Activated B cell treated with CpG ODN at 0.5 μM for 24 hours (primary cell): ENCODE measurements at regions of chr5 and their contacts with region 1.

Region 1: DNA sequence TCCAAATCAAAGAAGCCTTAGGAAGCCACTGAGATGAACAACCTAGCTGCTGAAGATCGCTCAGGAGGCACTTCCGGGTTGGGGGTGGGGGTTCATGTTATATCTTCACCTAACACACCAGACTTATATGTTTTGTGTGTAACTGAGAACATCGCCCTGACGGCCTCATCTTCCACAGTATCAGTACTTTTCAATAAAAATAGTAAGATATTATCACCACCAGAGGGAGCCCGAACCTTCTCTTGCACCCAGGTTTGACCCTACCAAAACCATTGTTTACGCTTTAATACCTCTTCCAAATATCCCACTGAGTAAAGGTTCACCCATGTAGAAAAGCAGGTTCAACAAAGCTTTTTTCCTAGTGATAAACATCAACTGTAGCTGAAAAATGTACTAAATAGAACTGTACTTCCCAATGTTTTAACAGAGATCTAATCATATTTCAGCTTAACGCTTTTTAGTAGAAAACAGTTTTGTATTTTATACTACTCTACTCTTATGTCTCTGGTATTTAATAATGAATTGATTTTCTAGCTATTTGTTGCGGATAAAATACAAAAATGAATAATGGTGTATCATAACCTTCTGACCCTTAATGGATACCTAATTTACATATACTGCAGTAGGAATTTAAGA is 244.0 kb downstream of the EPB41L4A start:
- DNase-seq: no peak
- ATAC-seq: peak; percentile 73
- H3K4me3 Mint-ChIP-seq: no peak overlapping the region
- H3K27ac Mint-ChIP-seq: no peak overlapping the region
- H3K4me1 Mint-ChIP-seq: peaks cover 4% of the 10 kb centered on the region
- H3K27me3 Mint-ChIP-seq: no peaks in the 10 kb centered on the region
- CTCF ChIP-seq: no peak

Region 2: DNA sequence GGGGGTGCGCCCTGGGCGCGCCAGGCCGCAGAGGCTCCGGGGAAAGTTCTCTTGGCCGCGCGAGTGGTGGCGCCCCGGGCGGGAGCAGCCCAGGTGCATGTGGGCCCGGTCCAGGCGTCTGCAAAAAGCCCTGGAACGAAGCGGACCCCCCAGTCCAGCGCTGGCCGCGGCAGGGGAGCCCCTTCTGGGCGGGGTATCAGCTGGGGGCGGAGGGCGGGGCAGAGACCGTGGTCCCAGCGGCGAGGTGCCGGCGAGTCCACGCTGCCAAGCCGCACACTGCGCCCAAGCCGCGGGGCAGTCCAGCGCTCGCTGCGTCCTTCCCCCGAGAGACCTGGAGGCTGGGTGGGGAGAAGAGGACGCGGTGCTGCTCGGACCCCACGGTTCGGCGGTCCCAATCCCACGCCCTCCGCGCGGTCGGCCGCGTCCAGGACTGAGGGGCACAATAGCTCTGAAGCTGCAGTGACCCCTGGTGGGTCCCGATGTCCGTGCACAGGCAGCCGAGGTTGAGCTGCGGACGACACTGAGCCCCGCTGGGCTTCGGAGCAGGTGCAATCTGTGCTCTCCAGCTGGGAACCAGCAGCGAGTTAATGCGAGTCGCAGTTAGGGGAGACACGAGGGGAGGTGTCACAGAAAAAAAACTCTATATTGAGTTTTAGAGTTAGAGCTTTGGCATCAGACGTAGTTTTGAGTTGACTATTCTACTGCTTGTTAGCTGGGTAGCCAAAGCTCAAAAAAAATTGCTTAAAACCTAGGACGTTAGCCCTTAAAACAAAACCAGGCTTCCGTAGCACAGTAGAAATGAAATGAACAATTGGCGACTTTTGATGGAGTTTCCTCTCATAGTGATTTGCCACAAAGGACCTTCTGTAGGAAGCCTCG is 245.1 kb after region 1 on chr5:
- CTCF ChIA-PET with region 1: interaction called, 94 read pairs
- POLR2A ChIA-PET with region 1: interaction called, 5 read pairs
- intact Hi-C with region 1: loop called (anchors 1 kb)
- DNase-seq: peak; percentile 68
- ATAC-seq: peak; percentile 84
- H3K4me3 Mint-ChIP-seq: peak overlapping the region; percentile 86
- H3K27ac Mint-ChIP-seq: no peak overlapping the region
- H3K4me1 Mint-ChIP-seq: peaks cover 11% of the 10 kb centered on the region
- H3K27me3 Mint-ChIP-seq: peaks cover 14% of the 10 kb centered on the region
- CTCF ChIP-seq: no peak

Region 3: DNA sequence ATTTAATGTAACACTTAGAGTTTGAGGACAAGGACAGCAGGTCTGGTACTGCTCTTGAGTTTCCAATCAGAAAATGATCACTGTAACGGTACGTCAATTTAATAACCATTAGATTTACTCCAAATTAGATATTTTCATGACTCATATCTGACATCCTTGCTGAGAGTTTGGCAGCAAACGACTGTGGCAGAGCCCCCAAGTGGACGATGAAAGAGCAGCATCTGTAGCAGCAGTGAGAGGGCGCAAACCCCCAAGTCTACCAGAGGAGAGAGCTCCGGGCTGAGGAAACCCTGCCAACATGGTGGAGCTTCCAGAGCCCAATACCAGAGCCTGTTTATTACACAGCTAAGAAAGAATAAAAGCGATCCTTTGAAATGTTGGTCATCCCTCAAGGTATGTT is 317.2 kb after region 1 on chr5:
- CTCF ChIA-PET with region 1: interaction called, 10 read pairs
- POLR2A ChIA-PET with region 1: no interaction called
- intact Hi-C with region 1: no loop called
- DNase-seq: no peak
- ATAC-seq: peak; percentile 98
- H3K4me3 Mint-ChIP-seq: no peak overlapping the region
- H3K27ac Mint-ChIP-seq: no peak overlapping the region
- H3K4me1 Mint-ChIP-seq: peaks cover 7% of the 10 kb centered on the region
- H3K27me3 Mint-ChIP-seq: no peaks in the 10 kb centered on the region
- CTCF ChIP-seq: no peak

Region 4: GRCh38 chr5:112551419-112552032 is 376.4 kb after region 1 on chr5:
- CTCF ChIA-PET with region 1: interaction called, 12 read pairs
- POLR2A ChIA-PET with region 1: no interaction called
- intact Hi-C with region 1: loop called (anchors 1 kb)
- DNase-seq: no peak
- ATAC-seq: peak; percentile 77
- H3K4me3 Mint-ChIP-seq: no peak overlapping the region
- H3K27ac Mint-ChIP-seq: no peak overlapping the region
- H3K4me1 Mint-ChIP-seq: peaks cover 33% of the 10 kb centered on the region
- H3K27me3 Mint-ChIP-seq: no peaks in the 10 kb centered on the region
- CTCF ChIP-seq: peak; percentile 16

Region 5: DNA sequence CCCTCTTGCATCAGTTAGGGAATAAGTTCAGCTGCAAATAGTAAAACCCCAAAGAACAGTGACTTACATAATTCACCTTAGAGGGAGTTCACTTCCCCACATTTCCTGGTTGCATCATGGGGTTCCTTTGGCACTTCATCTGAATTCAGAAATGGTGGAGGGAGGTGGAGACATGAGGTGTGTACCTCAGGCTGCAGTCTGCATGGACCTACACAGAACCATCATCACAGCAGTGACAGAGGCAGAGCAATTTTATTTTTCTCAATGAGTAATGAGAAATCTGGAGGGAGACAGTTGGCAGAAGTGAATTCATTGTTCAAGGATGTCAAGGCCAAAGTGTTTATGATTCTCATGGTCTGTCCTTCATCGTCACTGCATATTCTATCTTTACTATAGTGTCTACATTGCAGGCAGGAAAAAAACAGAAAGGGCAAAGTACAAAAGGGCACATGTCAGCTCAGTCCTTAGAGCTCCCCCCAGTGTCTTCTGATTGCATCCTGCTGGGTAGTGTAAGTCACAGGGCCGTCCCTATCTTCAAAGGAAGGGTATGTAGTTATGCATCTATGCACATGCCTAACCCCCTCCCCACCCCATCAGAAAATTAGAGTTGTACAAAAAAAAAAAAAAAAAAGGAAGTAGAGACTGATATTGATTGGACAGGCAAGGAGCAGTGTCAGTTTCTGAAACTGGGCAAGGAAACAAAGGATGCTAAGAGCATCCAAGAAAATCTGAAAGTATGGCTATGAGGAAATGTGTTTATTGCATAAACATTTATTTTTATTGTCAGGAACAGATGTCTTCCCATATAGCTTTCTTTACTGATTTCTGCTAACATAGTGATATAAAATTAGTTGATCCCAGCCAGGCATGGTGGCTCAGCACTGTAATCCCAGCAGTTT is 429.9 kb after region 1 on chr5:
- CTCF ChIA-PET with region 1: interaction called, 7 read pairs
- POLR2A ChIA-PET with region 1: no interaction called
- intact Hi-C with region 1: loop called (anchors 2 kb)
- DNase-seq: no peak
- ATAC-seq: peak; percentile 98
- H3K4me3 Mint-ChIP-seq: no peak overlapping the region
- H3K27ac Mint-ChIP-seq: no peak overlapping the region
- H3K4me1 Mint-ChIP-seq: peaks cover 11% of the 10 kb centered on the region
- H3K27me3 Mint-ChIP-seq: no peaks in the 10 kb centered on the region
- CTCF ChIP-seq: no peak

Region 6: GRCh38 chr5:112757468-112758208 is 582.6 kb after region 1 on chr5:
- CTCF ChIA-PET with region 1: interaction called, 38 read pairs
- POLR2A ChIA-PET with region 1: interaction called, 3 read pairs
- intact Hi-C with region 1: loop called (anchors 1 kb)
- DNase-seq: no peak
- ATAC-seq: peak; percentile 81
- H3K4me3 Mint-ChIP-seq: no peak overlapping the region
- H3K27ac Mint-ChIP-seq: peak overlapping the region; percentile 46
- H3K4me1 Mint-ChIP-seq: peaks cover 12% of the 10 kb centered on the region
- H3K27me3 Mint-ChIP-seq: no peaks in the 10 kb centered on the region
- CTCF ChIP-seq: peak; percentile 82

Region 7: DNA sequence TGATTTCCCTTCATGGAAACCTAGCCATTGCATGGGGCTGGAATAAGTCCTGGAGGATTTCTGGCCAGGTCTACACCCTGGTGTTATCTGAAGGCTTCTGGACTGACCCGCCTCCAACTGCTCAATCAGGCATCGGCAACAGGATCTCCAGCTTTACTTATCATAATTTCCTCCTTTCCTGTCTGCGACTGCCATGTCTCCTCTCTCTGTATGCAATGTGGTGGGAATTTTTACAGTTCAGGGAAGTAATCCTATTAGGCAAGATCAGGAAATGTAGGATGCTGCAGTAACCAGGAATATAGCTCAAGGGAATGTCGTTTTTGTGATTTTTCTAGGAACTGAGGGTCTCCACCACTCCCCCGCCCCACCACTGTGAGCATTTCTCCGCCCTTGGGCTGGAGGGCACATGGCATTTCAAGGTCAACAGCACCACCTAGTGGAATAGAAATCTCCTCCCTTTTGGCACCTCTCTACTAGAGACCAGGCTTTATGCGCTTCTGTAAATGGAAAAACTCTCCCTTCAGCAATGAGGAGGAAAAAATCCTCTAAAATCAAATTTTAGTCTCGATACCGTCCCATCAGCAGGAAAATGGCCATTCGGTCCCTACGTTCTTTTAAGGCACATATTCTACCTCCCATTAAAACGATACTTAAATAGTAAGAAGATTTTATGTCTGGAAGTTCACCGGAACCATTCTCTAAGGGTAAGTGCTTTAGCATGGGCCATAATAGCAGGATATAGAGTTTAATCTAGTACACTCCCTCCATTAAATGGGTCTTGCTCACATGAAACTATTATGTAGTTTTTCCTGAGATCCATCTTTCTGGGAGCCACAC is 1431.4 kb after region 1 on chr5:
- CTCF ChIA-PET with region 1: no interaction called
- POLR2A ChIA-PET with region 1: no interaction called
- intact Hi-C with region 1: loop called (anchors 2 kb)
- DNase-seq: no peak
- ATAC-seq: peak; percentile 73
- H3K4me3 Mint-ChIP-seq: no peak overlapping the region
- H3K27ac Mint-ChIP-seq: no peak overlapping the region
- H3K4me1 Mint-ChIP-seq: no peaks in the 10 kb centered on the region
- H3K27me3 Mint-ChIP-seq: peaks cover 30% of the 10 kb centered on the region
- CTCF ChIP-seq: peak; percentile 61